GM23248 (cell line): ENCODE measurements at regions of chr7 and their contacts with region 1.

Region 1: GRCh38 chr7:54242776-54243175 is 299.4 kb upstream of the VSTM2A start:
- DNase-seq: no peak
- H3K4me3 ChIP-seq: no peak overlapping the region
- H3K27ac ChIP-seq: no peak overlapping the region
- H3K4me1 ChIP-seq: no peaks in the 10 kb centered on the region
- H3K27me3 ChIP-seq: no peaks in the 10 kb centered on the region

Region 2: GRCh38 chr7:52917982-52918578 is 1324.7 kb before region 1 on chr7:
- in situ Hi-C with region 1: no loop called
- DNase-seq: peak; percentile 1
- H3K4me3 ChIP-seq: no peak overlapping the region
- H3K27ac ChIP-seq: no peak overlapping the region
- H3K4me1 ChIP-seq: no peaks in the 10 kb centered on the region
- H3K27me3 ChIP-seq: no peaks in the 10 kb centered on the region

Region 3: GRCh38 chr7:53690411-53690810 is 552.4 kb before region 1 on chr7:
- in situ Hi-C with region 1: no loop called
- DNase-seq: no peak
- H3K4me3 ChIP-seq: no peak overlapping the region
- H3K27ac ChIP-seq: no peak overlapping the region
- H3K4me1 ChIP-seq: no peaks in the 10 kb centered on the region
- H3K27me3 ChIP-seq: no peaks in the 10 kb centered on the region

Region 4: GRCh38 chr7:54339073-54339472 is 96.3 kb after region 1 on chr7:
- in situ Hi-C with region 1: loop called (anchors 10 kb)
- DNase-seq: peak; percentile 8
- H3K4me3 ChIP-seq: no peak overlapping the region
- H3K27ac ChIP-seq: no peak overlapping the region
- H3K4me1 ChIP-seq: no peaks in the 10 kb centered on the region
- H3K27me3 ChIP-seq: no peaks in the 10 kb centered on the region